ENCODE measurements at regions of chr17 and their contacts with region 1.

Region 1: DNA sequence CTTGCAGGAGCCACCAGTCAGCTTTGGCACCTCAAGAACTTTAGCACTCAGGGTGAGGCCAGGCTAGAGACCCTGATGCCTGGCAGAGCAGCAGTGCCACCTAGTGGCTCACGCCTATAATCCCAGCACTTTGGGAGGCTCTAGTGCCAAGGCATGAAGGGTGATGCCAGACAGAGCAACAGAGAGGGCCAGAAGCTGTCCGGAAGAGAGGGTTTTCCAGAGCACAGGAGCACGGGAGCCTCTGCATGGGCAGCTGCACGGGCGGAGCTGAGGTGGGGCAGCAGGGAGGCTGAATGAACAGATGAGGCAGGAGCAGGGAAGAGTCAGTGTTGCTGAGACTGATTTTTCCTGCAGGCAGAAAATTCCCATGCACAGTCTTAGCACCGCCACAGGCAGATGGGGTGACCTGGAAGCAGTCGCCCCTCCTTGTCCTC is 38.9 kb downstream of the MYH3 start:
- DNase-seq: peak; percentile 72
- ATAC-seq: peak; percentile 81
- H3K4me3 ChIP-seq: no peak overlapping the region
- H3K4me3 Mint-ChIP-seq: no peak overlapping the region
- H3K27ac ChIP-seq: no peak overlapping the region
- H3K27ac Mint-ChIP-seq: no peak overlapping the region
- H3K4me1 ChIP-seq: peaks cover 4 to 14% of the 10 kb centered on the region in 2 donors
- H3K4me1 Mint-ChIP-seq: peaks cover 6% of the 10 kb centered on the region
- H3K27me3 ChIP-seq: peaks cover 0 to 4% (median 0%) of the 10 kb centered on the region in 4 experiments
- H3K27me3 Mint-ChIP-seq: peaks cover 3% of the 10 kb centered on the region
- CTCF ChIP-seq: peak; percentile 85

Region 2: GRCh38 chr17:9924735-9925191 is 693.5 kb before region 1 on chr17:
- CTCF ChIA-PET with region 1: interaction called, 137 read pairs
- POLR2A ChIA-PET with region 1: no interaction called
- intact Hi-C with region 1: loop called (anchors 1 kb)
- DNase-seq: peak; percentile 75
- ATAC-seq: peak; percentile 79
- H3K4me3 ChIP-seq: no peak overlapping the region
- H3K4me3 Mint-ChIP-seq: no peak overlapping the region
- H3K27ac ChIP-seq: no peak overlapping the region
- H3K27ac Mint-ChIP-seq: no peak overlapping the region
- H3K4me1 ChIP-seq: no peaks in the 10 kb centered on the region
- H3K4me1 Mint-ChIP-seq: peaks cover 3% of the 10 kb centered on the region
- H3K27me3 ChIP-seq: no peaks in the 10 kb centered on the region
- H3K27me3 Mint-ChIP-seq: no peaks in the 10 kb centered on the region
- CTCF ChIP-seq: peak; percentile 95

Region 3: DNA sequence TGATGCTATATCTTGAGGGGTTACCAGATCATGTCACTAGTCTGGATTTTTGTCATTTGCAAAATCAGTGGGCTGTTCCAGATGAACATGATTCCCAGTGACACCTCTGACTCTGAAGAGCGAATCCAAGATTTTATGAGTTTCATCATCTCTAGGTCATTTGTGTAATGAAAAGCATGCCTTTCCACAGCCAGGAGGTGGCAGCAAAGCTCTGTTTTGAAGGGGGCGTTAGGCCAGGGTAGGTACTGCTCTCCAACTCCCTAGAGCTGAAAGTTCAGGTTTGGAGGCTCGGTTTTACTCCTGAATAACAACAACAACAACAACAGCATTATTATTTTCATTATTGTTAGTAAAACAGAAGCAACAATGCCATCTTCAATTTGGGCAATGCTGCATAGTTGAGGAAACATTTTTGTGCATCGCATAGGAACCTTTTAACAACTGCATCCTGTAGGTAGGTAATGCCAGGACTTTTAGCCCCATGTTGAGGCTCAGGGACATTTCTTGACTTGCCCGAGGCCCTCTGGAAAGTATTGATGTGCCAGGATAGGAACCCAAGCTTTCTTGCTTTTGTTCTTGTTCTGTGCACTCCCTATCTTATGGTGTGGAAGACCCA is 322.4 kb before region 1 on chr17:
- CTCF ChIA-PET with region 1: no interaction called
- POLR2A ChIA-PET with region 1: no interaction called
- intact Hi-C with region 1: loop called (anchors 5 kb)
- DNase-seq: peak; percentile 25
- ATAC-seq: no peak
- H3K4me3 ChIP-seq: no peak overlapping the region
- H3K4me3 Mint-ChIP-seq: no peak overlapping the region
- H3K27ac ChIP-seq: no peak overlapping the region
- H3K27ac Mint-ChIP-seq: no peak overlapping the region
- H3K4me1 ChIP-seq: no peaks in the 10 kb centered on the region
- H3K4me1 Mint-ChIP-seq: peaks cover 6% of the 10 kb centered on the region
- H3K27me3 ChIP-seq: no peaks in the 10 kb centered on the region
- H3K27me3 Mint-ChIP-seq: peaks cover 13% of the 10 kb centered on the region
- CTCF ChIP-seq: peak; percentile 48

Region 4: DNA sequence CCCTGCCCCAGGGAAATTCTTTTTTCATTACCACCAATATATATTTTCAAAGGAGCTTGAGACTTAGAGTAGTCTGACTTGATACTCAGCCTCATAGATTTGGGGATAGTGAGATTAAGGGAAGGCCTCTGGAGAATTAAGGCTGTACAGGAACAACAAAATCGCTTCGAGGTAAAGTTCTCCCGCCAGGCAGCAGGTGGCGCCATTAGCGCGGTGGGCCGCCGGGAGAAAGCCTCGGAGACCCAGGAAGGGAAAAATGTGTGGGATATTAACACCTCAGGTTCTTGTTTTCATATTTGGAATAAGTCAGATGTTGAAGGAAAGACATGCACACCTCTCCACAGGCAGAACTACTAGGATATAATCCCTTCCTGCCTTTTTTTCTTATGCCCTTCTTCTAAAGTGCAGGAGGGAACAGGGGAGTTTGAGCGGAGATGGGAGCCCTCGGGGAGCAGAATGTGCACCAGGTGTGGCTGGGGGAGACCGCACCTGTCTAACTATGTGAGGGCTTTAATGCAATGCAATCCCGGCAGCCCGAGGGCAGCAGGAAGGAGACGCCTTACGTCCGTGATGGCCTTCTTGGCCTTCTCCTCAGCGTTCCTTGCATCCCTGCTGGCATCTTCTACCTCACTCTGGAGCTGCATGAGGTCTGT is 13.0 kb after region 1 on chr17:
- CTCF ChIA-PET with region 1: interaction called, 159 read pairs
- POLR2A ChIA-PET with region 1: no interaction called
- intact Hi-C with region 1: no loop called
- DNase-seq: peak; percentile 43
- ATAC-seq: no peak
- H3K4me3 ChIP-seq: no peak overlapping the region
- H3K4me3 Mint-ChIP-seq: no peak overlapping the region
- H3K27ac ChIP-seq: no peak overlapping the region
- H3K27ac Mint-ChIP-seq: no peak overlapping the region
- H3K4me1 ChIP-seq: peaks cover 13 to 26% of the 10 kb centered on the region in 2 donors
- H3K4me1 Mint-ChIP-seq: peaks cover 28% of the 10 kb centered on the region
- H3K27me3 ChIP-seq: no peaks in the 10 kb centered on the region
- H3K27me3 Mint-ChIP-seq: no peaks in the 10 kb centered on the region
- CTCF ChIP-seq: peak; percentile 92

Region 5: GRCh38 chr17:10844621-10845387 is 226.6 kb after region 1 on chr17:
- CTCF ChIA-PET with region 1: interaction called, 13 read pairs
- POLR2A ChIA-PET with region 1: no interaction called
- intact Hi-C with region 1: loop called (anchors 1 kb)
- DNase-seq: peak; percentile 79
- ATAC-seq: peak; percentile 95
- H3K4me3 ChIP-seq: peak overlapping the region in 4 of 5 experiments; percentile 25 to 52 (median 38)
- H3K4me3 Mint-ChIP-seq: peak overlapping the region; percentile 90
- H3K27ac ChIP-seq: no peak overlapping the region
- H3K27ac Mint-ChIP-seq: peak overlapping the region; percentile 10
- H3K4me1 ChIP-seq: peaks cover 6 to 7% of the 10 kb centered on the region in 2 donors
- H3K4me1 Mint-ChIP-seq: peaks cover 8% of the 10 kb centered on the region
- H3K27me3 ChIP-seq: peaks cover 0 to 14% (median 0%) of the 10 kb centered on the region in 4 experiments
- H3K27me3 Mint-ChIP-seq: peaks cover 19% of the 10 kb centered on the region
- CTCF ChIP-seq: peak; percentile 95

Measured in B cell (primary cell).